ENCODE measurements at regions of chr10 and their contacts with region 1.

Region 1: GRCh38 chr10:69515699-69516259 is 57.4 kb downstream of the NEUROG3 start:
- DNase-seq: peak; percentile 34 to 72
- ATAC-seq: peak; percentile 28 to 85 (median 82)
- H3K4me3 ChIP-seq: no peak overlapping the region
- H3K27ac ChIP-seq: no peak overlapping the region
- H3K4me1 ChIP-seq: no peaks in the 10 kb centered on the region
- H3K27me3 ChIP-seq: peaks cover 0 to 19% (median 0%) of the 10 kb centered on the region in 7 donors
- CTCF ChIP-seq: peak; percentile 44 to 82 (median 68)

Region 2: GRCh38 chr10:68419376-68419775 is 1096.4 kb before region 1 on chr10:
- intact Hi-C with region 1: loop called in 1 of 10 experiments (anchors 5 kb)
- DNase-seq: no peak
- ATAC-seq: no peak
- H3K4me3 ChIP-seq: no peak overlapping the region
- H3K27ac ChIP-seq: no peak overlapping the region
- H3K4me1 ChIP-seq: no peaks in the 10 kb centered on the region
- H3K27me3 ChIP-seq: no peaks in the 10 kb centered on the region
- CTCF ChIP-seq: no peak

Region 3: DNA sequence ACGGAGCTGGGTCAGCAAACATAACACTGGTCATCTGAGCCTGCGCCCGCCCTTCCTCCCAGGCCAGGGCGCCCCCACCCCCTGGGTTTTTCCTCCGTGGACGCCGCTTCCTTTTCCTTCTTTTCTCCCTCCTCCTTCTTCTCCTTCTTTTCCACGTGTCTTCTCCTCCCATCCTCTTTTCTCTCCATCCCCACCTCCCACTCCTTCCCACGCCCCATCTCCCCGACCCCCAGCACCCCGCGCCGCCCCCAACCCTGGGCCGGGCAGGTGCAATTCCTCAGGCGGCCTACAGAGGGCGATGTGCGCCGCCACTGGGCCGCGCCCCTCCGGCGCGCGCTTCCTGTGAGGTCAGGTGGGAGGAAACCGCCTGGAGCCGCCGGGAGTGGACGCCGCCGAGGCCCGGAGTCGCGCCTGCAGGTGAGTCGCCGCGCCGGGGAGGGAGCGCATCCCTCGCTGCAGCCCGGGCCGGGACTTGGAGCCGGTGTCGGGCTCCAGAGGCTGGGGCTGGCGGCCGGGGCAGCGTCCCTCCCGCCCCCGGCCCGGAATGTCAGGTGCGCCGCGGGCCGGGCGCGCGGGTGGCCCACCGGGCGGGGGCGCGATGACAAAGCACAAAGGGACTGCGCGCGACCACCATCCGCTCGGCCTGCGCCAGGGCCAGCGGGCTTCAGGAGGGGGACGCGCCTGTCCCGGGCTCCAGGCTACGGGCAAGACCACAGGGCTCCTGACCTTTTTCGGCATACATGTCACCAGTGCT is 114.3 kb after region 1 on chr10 and contains the start of gene FAM241B:
- intact Hi-C with region 1: loop called in 4 of 10 experiments (anchors 5 kb)
- DNase-seq: peak; percentile 38 to 64
- ATAC-seq: peak; percentile 83 to 86 (median 84)
- H3K4me3 ChIP-seq: peak within 1 kb of the TSS; percentile 27 to 63 (median 56)
- H3K27ac ChIP-seq: peak within 1 kb of the TSS in 1 of 10 donors; percentile 50
- H3K4me1 ChIP-seq: peaks cover 0 to 16% (median 7%) of the 10 kb centered on the region in 9 donors
- H3K27me3 ChIP-seq: peaks cover 0 to 27% (median 24%) of the 10 kb centered on the region in 7 donors
- CTCF ChIP-seq: peak; percentile 91 to 98 (median 97)
- total RNA-seq, gene FAM241B: 1.4 to 9.0 (median 5.2) TPM

Region 4: GRCh38 chr10:69639291-69640195 is 123.8 kb after region 1 on chr10:
- intact Hi-C with region 1: loop called (anchors 1 to 5 kb)
- DNase-seq: peak; percentile 36 to 64
- ATAC-seq: peak in 6 of 8 donors; percentile 32 to 75 (median 60)
- H3K4me3 ChIP-seq: no peak overlapping the region
- H3K27ac ChIP-seq: no peak overlapping the region
- H3K4me1 ChIP-seq: no peaks in the 10 kb centered on the region
- H3K27me3 ChIP-seq: peaks cover 0 to 37% (median 12%) of the 10 kb centered on the region in 7 donors
- CTCF ChIP-seq: peak; percentile 75 to 90 (median 87)

Region 5: GRCh38 chr10:69994262-69994661 is 478.5 kb after region 1 on chr10:
- intact Hi-C with region 1: no loop called
- DNase-seq: peak in 1 of 2 donors; percentile 29
- ATAC-seq: peak in 7 of 8 donors; percentile 56 to 85 (median 74)
- H3K4me3 ChIP-seq: no peak overlapping the region
- H3K27ac ChIP-seq: no peak overlapping the region
- H3K4me1 ChIP-seq: no peaks in the 10 kb centered on the region
- H3K27me3 ChIP-seq: peaks cover 0 to 3% (median 0%) of the 10 kb centered on the region in 7 donors
- CTCF ChIP-seq: no peak

Region 6: DNA sequence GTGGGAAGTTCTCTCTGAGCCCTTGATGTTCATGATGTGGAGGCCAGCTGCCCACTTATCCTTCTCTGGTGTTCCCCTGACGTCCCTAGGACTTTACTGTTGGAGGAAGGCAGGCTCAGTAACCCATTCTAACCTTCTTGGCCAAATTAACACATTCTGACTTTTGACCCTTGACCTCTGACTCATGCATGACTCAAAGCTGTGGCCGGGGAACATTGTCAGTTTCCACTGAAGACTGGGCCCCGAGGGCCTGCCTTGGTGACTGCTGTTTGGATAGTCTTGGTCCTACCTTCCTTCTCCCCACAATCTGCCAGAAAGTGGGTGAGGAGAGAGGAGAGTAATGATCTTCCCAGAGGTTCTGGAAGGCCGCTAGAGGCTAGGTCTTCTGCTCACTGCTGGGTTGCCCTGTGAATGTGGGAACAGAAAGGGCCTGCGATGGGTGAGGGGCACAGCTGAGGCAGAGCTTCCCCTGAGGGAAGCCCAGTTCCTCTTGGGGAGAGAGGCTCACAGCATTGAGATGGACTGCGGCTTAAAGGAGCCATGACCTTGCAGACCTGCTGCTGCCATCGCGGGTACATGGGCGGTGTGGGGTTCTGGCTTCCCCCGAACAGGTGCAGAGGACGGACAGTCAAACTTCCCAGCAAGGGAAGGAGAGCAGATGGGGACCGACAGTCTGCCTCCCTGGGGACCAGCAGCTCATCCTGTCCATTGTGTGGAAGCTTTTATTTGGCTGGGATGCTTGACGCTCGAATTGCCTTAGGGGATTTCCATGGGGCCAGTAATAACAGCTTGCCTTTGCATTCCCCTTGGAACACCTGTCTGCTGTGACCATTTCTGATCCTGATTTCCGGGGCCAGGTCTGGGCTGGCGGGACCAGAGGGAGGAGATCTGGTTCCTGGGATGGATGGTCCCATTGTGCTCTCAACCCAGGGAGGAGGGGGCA is 1200.3 kb after region 1 on chr10:
- intact Hi-C with region 1: no loop called
- DNase-seq: peak in 1 of 2 donors; percentile 32
- ATAC-seq: peak in 5 of 8 donors; percentile 20 to 68 (median 63)
- H3K4me3 ChIP-seq: no peak overlapping the region
- H3K27ac ChIP-seq: peak overlapping the region in 1 of 10 donors; percentile 57
- H3K4me1 ChIP-seq: peaks cover 0 to 24% (median 8%) of the 10 kb centered on the region in 9 donors
- H3K27me3 ChIP-seq: no peaks in the 10 kb centered on the region
- CTCF ChIP-seq: no peak

Measured in heart right ventricle (tissue), 16 donors.